BJ (cell line): ENCODE measurements at regions of chr6 and their contacts with region 1.

Region 1: DNA sequence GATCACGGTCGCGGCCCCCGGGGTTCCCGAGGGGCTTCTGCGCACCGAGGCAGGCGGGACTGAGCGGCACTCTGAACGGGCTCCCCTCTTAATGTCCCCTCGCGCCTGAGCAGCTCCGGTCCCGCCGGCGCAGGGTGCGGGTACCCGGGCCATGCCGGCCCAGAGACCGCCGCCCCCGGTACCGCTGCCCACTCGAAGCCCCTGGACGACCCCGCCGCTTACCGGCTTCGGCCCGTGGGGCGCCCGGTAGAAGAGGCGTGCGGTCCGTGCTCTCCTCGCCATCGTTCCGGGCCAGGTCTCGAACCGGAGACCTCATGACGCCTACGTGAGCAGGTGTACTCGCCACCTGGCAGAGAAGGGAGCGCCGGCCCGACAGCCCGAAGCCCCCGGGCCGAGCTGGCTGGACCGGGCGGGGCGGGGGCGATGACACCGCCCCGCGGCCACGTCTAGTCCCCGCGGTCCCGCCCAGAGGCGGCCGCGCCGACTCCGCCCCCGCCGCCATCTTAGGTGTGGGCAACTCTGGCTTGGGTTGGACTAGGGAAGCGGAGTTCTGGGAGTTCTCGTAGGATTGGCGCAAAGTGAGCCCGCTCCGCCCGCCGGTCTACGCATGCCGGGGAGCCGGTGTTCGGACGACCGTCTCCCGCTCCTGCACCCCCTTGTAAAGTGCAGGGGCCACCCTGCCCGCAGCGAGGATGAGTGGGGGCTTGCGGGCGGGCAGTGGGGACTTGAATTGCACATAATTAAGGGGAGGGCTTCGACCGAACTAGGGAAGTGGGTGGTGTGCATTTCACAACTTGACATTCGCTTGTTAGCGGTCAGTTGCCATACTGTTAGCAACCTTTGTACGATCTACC is at the start of gene SLC17A5:
- DNase-seq: peak; percentile 61
- H3K4me3 ChIP-seq: peak within 1 kb of the TSS; percentile 100
- H3K27me3 ChIP-seq: no peaks in the 10 kb centered on the region
- CTCF ChIP-seq: no peak
- polyA plus RNA-seq, gene SLC17A5: 13.2 and 21.2 TPM in 2 replicates

Region 2: DNA sequence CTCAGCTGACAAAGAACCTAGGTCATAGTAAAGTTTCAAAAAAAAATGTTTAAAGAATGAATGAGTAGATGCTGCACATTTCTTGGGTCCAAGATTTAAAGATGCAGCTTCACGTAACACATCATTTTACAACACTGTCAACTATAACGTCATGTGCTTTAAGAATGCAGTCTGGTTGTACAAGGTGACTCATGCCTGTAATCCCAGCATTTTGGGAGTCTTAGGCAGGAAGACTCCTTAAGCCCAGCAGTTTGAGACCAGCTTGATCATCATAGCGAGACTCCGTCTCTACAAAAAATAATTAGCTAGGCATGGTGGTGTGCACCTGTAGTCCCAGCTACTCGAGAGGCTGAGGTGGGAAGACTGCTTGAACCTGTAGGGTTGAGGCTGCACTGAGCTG is 21.9 kb before region 1 on chr6:
- CTCF ChIA-PET with region 1: interaction called, 9 read pairs
- POLR2A ChIA-PET with region 1: interaction called, 11 read pairs
- DNase-seq: no peak
- H3K4me3 ChIP-seq: no peak overlapping the region
- H3K27me3 ChIP-seq: no peaks in the 10 kb centered on the region
- CTCF ChIP-seq: no peak

Region 3: GRCh38 chr6:73747289-73747688 is 93.5 kb after region 1 on chr6:
- CTCF ChIA-PET with region 1: no interaction called
- POLR2A ChIA-PET with region 1: no interaction called
- DNase-seq: no peak
- H3K4me3 ChIP-seq: no peak overlapping the region
- H3K27me3 ChIP-seq: no peaks in the 10 kb centered on the region
- CTCF ChIP-seq: no peak

Region 4: DNA sequence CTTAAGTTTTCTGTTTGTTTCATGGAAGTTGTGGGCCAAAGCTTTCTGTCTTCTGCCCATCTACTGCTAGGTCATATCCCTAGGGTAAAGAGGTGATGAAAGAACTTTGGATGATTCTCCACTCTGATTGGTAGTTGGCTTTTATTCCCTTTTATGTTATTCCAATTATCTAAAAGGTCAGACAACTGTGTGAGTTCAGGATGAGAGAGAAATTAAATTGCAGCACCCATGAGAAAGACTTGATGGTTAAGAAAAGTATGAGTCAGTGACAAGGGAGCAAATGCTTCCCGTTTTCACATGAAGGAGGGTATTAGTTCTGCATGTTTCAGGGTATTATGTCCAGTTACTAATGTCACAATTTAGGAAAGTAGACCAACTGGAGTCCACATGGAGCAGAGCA is 178.5 kb after region 1 on chr6:
- CTCF ChIA-PET with region 1: no interaction called
- POLR2A ChIA-PET with region 1: no interaction called
- DNase-seq: no peak
- H3K4me3 ChIP-seq: no peak overlapping the region
- H3K27me3 ChIP-seq: no peaks in the 10 kb centered on the region
- CTCF ChIP-seq: no peak

Region 5: GRCh38 chr6:73932866-73933265 is 279.1 kb after region 1 on chr6:
- CTCF ChIA-PET with region 1: no interaction called
- POLR2A ChIA-PET with region 1: no interaction called
- DNase-seq: no peak
- H3K4me3 ChIP-seq: no peak overlapping the region
- H3K27me3 ChIP-seq: no peaks in the 10 kb centered on the region
- CTCF ChIP-seq: no peak